Lower lobe of right lung (tissue), 2 donors: ENCODE measurements at regions of chr5 and their contacts with region 1.

Region 1: DNA sequence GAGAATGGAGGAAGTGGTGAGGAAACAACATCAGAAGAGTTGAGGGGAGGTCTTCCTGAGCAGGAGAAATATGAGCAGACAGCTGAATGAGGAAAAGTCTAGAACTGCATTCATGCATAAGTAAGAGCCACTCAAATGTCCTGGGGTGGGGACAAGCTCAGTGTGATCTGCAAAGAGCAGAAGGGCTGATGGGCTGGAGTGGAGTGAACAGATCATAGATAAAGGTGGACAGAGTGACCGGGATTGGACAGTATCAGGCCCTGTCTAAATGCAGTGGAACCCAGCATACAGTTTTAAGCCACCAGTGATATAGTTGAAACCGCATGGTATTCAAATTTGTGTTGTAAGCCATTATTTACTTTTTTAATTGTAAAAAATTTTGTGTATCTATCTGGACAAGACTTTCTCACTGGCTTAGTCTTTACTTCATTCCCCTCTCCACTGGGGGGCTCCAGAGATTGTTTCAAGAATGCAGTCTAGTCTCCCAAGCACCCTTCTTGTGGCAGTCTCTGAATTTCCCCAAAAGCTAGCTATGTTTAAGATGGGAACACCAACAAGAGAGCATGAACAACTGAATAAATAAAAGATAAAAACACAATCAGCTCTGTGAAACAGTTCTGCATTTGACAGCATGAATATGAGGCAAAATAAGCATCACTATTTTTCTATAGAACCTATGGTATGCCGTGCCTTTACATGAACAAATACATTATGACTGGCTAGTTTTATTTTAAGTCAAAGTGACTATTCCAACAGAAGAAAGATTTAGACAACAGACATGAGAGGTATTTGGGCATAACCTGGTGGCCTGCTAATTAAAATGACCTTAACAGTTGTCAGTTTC is 10.7 kb upstream of the STK32A start:
- DNase-seq: no peak
- ATAC-seq: peak; percentile 70 to 85
- H3K4me3 ChIP-seq: no peak overlapping the region
- H3K27ac ChIP-seq: no peak overlapping the region
- H3K4me1 ChIP-seq: no peaks in the 10 kb centered on the region
- H3K27me3 ChIP-seq: no peaks in the 10 kb centered on the region
- CTCF ChIP-seq: peak; percentile 69

Region 2: DNA sequence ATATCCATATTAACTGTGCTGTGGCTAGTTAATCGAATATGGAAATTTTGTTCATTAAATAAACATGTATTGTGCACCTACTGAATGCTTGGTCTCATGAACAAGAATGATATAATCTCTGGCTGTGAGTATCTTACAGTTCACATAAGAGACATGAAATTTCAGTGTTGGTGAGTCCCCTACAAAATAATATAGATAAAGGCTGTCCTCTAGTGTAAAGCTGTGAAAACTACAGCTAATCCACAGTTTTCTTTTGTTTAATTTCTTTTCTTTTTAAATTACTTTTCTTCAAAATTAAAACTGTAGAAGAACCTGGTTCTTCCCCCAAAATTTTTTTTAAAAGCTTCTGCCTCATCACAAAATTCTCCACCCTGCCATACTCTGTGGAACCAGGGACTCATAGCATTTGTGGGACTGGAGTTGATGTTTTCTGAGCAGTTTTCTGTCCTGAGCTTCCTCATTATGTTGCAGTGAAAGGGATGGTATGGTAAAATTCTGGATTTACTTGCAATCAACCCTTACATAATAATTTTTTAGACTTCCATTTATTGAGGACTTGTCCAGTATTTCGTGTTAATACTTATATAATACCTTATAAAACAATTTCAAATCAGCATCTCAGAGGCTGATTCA is 145.7 kb after region 1 on chr5:
- intact Hi-C with region 1: loop called (anchors 10 kb)
- DNase-seq: no peak
- ATAC-seq: peak in 1 of 2 donors; percentile 68
- H3K4me3 ChIP-seq: no peak overlapping the region
- H3K27ac ChIP-seq: no peak overlapping the region
- H3K4me1 ChIP-seq: no peaks in the 10 kb centered on the region
- H3K27me3 ChIP-seq: no peaks in the 10 kb centered on the region
- CTCF ChIP-seq: peak; percentile 50